ENCODE measurements at regions of chr1 and their contacts with region 1.

Region 1: DNA sequence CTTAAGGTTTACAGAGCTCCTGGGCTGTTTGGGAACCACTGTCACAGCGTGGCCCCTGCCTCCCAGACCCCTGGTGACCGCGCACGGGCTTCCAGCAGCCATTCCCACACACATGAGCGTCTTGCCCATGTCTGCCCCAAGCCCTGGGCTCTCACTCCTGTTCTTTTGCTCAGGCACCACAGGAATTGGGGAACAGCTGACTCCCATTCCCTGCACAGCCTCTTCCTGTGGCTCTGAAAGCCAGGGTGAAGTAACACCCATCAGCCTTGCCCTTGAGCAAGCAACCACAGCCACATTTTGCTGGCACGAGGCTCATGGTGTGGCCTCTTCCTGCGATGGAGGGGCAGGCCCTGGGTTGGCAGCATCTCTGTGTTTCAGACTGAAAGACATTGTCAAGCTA is 14.3 kb upstream of the GPR157 start:
- DNase-seq: peak in 1 of 4 donors; percentile 34
- ATAC-seq: no peak
- H3K4me3 ChIP-seq: no peak overlapping the region
- H3K27ac ChIP-seq: no peak overlapping the region
- H3K4me1 ChIP-seq: no peaks in the 10 kb centered on the region
- H3K27me3 ChIP-seq: no peaks in the 10 kb centered on the region
- CTCF ChIP-seq: no peak
- POLR2A ChIP-seq: no peak

Region 2: GRCh38 chr1:9196129-9197040 is 53.1 kb after region 1 on chr1:
- intact Hi-C with region 1: loop called (anchors 5 kb)
- DNase-seq: peak; percentile 71 to 78 (median 74)
- ATAC-seq: peak; percentile 63
- H3K4me3 ChIP-seq: no peak overlapping the region
- H3K27ac ChIP-seq: peak overlapping the region in 1 of 4 donors; percentile 5
- H3K4me1 ChIP-seq: peaks cover 13% of the 10 kb centered on the region
- H3K27me3 ChIP-seq: no peaks in the 10 kb centered on the region
- CTCF ChIP-seq: peak; percentile 58 to 84 (median 76)
- POLR2A ChIP-seq: no peak